ENCODE measurements at regions of chr22 and their contacts with region 1.

Region 1: GRCh38 chr22:17164392-17165024 is 5.4 kb upstream of the HDHD5 start:
- DNase-seq: no peak
- H3K4me3 ChIP-seq: no peak overlapping the region
- H3K27ac ChIP-seq: no peak overlapping the region
- H3K4me1 ChIP-seq: peaks cover 0 to 17% (median 7%) of the 10 kb centered on the region in 3 donors
- H3K27me3 ChIP-seq: no peaks in the 10 kb centered on the region
- CTCF ChIP-seq: no peak
- POLR2A ChIP-seq: no peak

Region 2: DNA sequence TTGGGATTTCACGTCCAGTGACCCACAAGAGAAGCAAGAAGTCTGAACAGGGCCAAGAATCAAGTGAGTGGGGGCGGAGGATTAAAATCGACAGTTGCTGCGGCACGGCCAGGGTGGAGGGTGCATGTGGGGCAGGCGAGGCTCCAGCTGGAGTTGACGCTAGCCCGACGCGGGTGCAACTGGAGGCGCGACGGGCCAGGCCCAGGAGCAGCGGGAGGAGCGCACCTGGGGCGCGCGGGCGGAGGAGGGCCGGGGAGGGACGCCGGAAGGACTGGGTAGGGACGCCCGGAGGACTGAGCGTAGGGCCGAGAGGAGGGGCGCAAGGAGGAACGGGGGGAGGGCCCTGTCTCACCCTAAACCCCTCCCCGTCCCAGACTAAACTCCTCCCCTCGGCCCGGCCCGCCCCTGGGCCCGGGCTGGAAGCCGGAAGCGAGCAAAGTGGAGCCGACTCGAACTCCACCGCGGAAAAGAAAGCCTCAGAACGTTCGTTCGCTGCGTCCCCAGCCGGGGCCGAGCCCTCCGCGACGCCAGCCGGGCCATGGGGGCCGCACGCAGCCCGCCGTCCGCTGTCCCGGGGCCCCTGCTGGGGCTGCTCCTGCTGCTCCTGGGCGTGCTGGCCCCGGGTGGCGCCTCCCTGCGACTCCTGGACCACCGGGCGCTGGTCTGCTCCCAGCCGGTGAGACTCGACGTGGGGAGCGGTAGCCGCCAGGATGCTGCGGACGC is 79.8 kb before region 1 on chr22 and contains the start of gene IL17RA:
- intact Hi-C with region 1: loop called (anchors 10 kb)
- DNase-seq: peak; percentile 58
- H3K4me3 ChIP-seq: peak within 1 kb of the TSS; percentile 75 to 99 (median 95)
- H3K27ac ChIP-seq: peak within 1 kb of the TSS; percentile 83 to 97 (median 96)
- H3K4me1 ChIP-seq: peaks cover 0 to 36% (median 22%) of the 10 kb centered on the region in 3 donors
- H3K27me3 ChIP-seq: no peaks in the 10 kb centered on the region
- CTCF ChIP-seq: no peak
- POLR2A ChIP-seq: peak in 2 of 4 donors; percentile 76 to 89
- total RNA-seq, gene IL17RA: 8.6 to 14.7 (median 9.1) TPM